BJ (cell line): ENCODE measurements at regions of chr4 and their contacts with region 1.

Region 1: DNA sequence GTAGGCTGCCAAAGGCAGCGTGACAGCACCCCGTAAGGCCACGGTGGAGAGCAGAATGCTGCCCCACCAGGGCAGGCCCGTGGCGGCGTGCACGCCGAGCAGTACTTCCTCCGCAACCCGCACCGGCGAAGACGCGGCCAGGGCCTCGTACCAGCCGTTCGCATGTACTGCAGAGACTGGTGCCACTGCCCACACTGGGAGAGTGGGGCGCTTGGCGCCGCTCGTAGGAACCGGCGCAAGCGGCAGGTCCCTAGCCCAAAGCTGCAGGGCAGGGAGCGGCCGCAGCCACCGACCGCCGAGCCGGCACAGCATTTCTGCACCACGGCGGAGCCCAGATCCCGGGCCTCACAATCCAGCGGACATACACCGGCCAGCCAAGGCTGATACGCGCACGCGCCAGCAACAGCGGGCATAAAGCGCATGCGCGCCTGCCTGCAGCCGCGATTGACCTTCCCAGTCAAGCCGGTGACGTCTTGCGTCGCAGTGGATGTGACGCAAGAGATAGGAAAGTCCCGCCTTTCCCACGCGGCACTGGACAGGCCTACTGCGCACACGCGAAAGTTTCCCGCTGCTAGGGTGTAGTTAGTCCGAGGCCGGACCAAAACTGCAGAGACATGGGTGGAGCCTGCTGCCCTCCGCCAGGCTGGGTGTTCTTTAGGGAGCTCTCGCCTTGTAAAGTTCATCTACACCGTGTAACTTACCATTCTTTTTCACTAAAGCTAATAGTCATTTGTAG is at the start of gene COX18:
- DNase-seq: peak; percentile 93
- H3K4me3 ChIP-seq: peak within 1 kb of the TSS; percentile 76
- H3K27me3 ChIP-seq: no peaks in the 10 kb centered on the region
- CTCF ChIP-seq: 0 out of 2 replicates have a peak, but pooled peaks have one; percentile 6
- polyA plus RNA-seq, gene COX18: 9.8 and 13.2 TPM in 2 replicates

Region 2: DNA sequence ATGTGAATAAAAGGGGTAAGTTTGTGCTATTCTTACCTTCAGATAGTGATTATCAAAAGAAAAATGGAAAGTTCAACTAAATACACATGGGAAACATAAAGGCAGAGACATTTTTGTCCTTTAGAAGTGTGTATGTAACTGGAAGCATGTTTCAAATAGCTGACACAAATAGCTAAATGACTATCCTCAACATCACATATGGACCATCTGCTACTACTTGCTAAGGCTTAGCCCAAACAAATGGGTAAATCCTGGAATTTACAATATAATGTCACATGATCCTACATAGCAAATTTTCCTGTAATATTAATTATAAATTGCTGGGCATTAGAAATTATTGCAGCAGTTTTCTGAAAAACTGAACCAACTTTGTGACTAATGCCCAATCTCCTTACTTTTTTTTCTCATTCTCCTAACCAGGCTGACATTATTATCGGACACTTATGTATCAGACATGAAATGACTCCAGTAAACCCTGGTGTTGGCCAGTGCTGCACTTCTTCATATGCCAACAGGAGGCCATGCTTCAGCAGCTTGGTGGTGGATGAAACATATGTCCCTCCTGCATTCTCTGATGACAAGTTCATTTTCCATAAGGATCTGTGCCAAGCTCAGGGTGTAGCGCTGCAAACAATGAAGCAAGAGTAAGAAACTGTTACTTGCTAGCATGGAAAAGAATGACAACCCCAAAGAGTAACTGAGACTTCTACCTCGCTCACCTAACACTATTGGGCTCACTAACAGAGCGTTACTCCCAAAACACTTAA is 382.7 kb after region 1 on chr4:
- CTCF ChIA-PET with region 1: no interaction called
- POLR2A ChIA-PET with region 1: interaction called, 10 read pairs
- DNase-seq: no peak
- H3K4me3 ChIP-seq: no peak overlapping the region
- H3K27me3 ChIP-seq: 0 out of 2 replicates have a peak, but pooled peaks cover 2% of the 10 kb centered on the region
- CTCF ChIP-seq: no peak